ENCODE measurements at regions of chr6 and their contacts with region 1.

Region 1: GRCh38 chr6:43386492-43386891 is 17.0 kb upstream of the ZNF318 start:
- DNase-seq: no peak
- ATAC-seq: no peak
- H3K4me3 Mint-ChIP-seq: peak overlapping the region; percentile 15
- H3K27ac Mint-ChIP-seq: peak overlapping the region; percentile 98
- H3K4me1 Mint-ChIP-seq: peaks cover 65% of the 10 kb centered on the region
- H3K27me3 Mint-ChIP-seq: peaks cover 18% of the 10 kb centered on the region
- CTCF ChIP-seq: no peak

Region 2: GRCh38 chr6:43274916-43275597 is 111.4 kb before region 1 on chr6:
- CTCF ChIA-PET with region 1: no interaction called
- POLR2A ChIA-PET with region 1: interaction called, 11 read pairs
- intact Hi-C with region 1: loop called (anchors 1 kb)
- DNase-seq: peak; percentile 55
- ATAC-seq: peak; percentile 8
- H3K4me3 Mint-ChIP-seq: peak overlapping the region; percentile 85
- H3K27ac Mint-ChIP-seq: peak overlapping the region; percentile 30
- H3K4me1 Mint-ChIP-seq: peaks cover 41% of the 10 kb centered on the region
- H3K27me3 Mint-ChIP-seq: peaks cover 24% of the 10 kb centered on the region
- CTCF ChIP-seq: no peak

Region 3: GRCh38 chr6:43334466-43335095 is 51.9 kb before region 1 on chr6:
- CTCF ChIA-PET with region 1: no interaction called
- POLR2A ChIA-PET with region 1: interaction called, 14 read pairs
- intact Hi-C with region 1: loop called (anchors 1 kb)
- DNase-seq: no peak
- ATAC-seq: no peak
- H3K4me3 Mint-ChIP-seq: no peak overlapping the region
- H3K27ac Mint-ChIP-seq: peak overlapping the region; percentile 15
- H3K4me1 Mint-ChIP-seq: peaks cover 56% of the 10 kb centered on the region
- H3K27me3 Mint-ChIP-seq: no peaks in the 10 kb centered on the region
- CTCF ChIP-seq: no peak

Region 4: DNA sequence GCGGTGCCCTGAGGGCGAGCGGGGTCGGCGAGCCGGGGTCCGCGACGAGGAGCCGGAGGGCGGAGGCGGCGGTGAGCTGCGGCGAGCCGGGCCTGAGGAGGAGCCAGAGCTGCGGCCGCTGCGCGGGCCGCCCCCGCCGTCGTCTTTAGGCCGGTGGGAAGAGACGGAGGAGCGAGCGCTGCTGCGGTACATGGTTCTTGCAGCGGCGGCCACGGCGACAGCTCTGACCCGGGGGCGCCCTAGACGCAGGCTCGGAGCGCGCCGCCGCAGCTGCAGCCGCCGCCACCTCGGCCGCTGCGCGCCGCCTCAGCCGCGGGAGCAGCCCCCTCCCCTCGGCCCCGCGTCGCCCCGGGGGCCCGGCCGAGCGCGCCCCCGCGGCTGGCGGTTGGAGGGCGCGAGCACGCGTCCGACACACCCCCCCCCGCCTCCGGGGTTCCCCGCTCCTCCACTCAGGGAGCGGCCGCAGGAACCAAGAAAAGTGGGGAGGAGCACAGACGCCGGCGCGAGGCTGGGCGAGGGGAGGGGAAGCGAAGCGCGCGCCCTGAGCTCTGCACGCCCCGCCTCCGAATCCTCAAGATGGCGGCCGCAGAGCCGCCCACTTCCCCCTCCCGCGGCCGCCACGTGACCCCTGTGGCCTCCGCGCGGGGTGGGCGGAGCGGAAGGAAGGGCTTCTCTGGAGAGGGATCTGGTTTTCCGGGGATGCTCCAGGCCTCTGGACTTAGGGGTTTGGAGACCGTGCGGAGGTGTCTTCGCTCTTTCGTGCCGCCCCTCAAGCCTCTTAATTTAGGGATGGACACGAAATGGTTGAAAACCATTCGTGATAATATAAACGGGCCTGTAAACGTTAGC is 17.1 kb before region 1 on chr6 and contains the start of gene ZNF318:
- CTCF ChIA-PET with region 1: interaction called, 75 read pairs
- POLR2A ChIA-PET with region 1: interaction called, 384 read pairs
- intact Hi-C with region 1: loop called (anchors 1 kb)
- DNase-seq: peak; percentile 92
- ATAC-seq: peak; percentile 90
- H3K4me3 Mint-ChIP-seq: peak within 1 kb of the TSS; percentile 95
- H3K27ac Mint-ChIP-seq: peak within 1 kb of the TSS; percentile 94
- H3K4me1 Mint-ChIP-seq: peaks cover 79% of the 10 kb centered on the region
- H3K27me3 Mint-ChIP-seq: no peaks in the 10 kb centered on the region
- CTCF ChIP-seq: no peak
- total RNA-seq, gene ZNF318: 135 and 159 TPM in 2 replicates

Region 5: DNA sequence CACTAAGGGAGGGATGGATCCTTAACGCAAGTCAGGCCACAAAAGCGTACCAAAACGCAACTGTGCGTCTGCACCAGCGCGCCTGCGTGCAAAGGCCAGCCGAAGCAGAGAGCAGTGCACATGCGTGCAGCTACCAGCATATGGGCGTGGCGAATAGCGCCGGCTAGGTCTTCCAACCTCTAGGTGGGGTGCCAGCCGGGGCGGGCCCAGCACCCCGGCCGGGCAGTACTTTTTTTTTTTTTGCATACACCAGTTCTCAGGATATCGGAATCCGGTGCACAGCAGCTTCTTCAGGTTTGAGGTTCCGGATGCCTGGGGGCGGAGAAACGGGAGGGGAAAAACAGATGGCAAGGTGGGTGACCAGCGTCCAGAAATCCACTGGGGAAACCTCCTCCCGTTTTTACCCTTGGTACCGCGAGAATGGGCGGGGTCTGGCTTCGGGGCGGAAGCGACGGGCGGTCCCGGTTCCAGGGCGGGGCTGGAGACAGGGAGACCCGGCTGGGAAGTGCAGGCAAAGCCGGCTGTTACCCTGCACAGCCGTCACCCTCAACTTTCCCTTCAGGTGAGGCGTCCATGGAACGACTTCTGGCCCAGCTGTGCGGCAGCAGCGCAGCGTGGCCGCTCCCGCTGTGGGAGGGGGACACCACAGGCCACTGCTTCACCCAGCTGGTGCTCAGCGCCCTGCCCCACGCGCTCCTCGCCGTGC is 41.1 kb after region 1 on chr6 and contains the start of gene ABCC10:
- CTCF ChIA-PET with region 1: no interaction called
- POLR2A ChIA-PET with region 1: interaction called, 12 read pairs
- intact Hi-C with region 1: loop called (anchors 1 kb)
- DNase-seq: peak; percentile 90
- ATAC-seq: peak; percentile 93
- H3K4me3 Mint-ChIP-seq: peak within 1 kb of the TSS; percentile 95
- H3K27ac Mint-ChIP-seq: peak within 1 kb of the TSS; percentile 95
- H3K4me1 Mint-ChIP-seq: peaks cover 20% of the 10 kb centered on the region
- H3K27me3 Mint-ChIP-seq: no peaks in the 10 kb centered on the region
- CTCF ChIP-seq: no peak
- total RNA-seq, gene ABCC10: 59.5 and 74.6 TPM in 2 replicates

Region 6: DNA sequence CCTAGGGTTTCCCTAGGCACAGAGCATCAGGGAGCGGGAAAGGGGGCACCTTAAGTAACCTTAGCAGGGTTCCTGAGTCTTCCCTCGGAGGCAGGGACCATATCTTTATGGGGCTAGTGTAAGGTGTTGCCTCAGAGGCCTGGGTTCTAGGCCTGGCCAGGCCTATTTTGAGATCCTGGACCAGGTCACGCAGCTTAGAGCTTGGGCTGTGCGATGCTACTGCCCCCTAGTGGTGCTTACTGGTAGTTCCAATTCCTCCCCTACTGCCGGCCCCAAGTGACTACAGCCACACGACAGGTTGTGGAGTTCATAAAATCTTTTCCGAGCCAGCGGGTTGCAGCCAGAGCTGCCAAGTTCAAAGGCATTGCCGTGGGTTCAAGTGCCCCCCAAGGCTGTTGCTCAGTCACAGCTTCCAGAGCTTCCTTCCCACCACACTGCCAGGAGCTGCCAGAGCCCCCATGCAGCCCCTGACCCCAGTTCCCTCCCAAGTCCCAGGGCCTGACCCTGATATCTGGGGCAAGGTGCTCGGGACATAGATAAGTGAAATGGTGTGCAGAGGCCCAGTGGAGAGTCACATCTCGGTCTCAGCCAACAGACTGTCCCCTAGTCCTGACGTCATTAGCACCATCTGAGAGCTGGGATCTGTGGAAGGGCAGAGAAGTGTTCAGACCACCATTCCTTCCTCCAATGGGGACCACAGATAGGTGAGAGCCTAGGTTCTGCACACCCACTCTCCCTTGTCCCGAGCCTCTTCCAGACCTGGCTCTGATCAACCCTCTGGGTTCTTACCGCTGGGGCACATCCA is 120.4 kb after region 1 on chr6:
- CTCF ChIA-PET with region 1: interaction called, 6 read pairs
- POLR2A ChIA-PET with region 1: no interaction called
- intact Hi-C with region 1: loop called (anchors 1 kb)
- DNase-seq: peak; percentile 67
- ATAC-seq: peak; percentile 60
- H3K4me3 Mint-ChIP-seq: no peak overlapping the region
- H3K27ac Mint-ChIP-seq: no peak overlapping the region
- H3K4me1 Mint-ChIP-seq: peaks cover 19% of the 10 kb centered on the region
- H3K27me3 Mint-ChIP-seq: peaks cover 9% of the 10 kb centered on the region
- CTCF ChIP-seq: peak; percentile 53